ENCODE measurements at regions of chr14 and their contacts with region 1.

Region 1: GRCh38 chr14:33564774-33565630 is 385.9 kb downstream of the EGLN3 start:
- DNase-seq: peak; percentile 98
- H3K4me3 ChIP-seq: peak overlapping the region in 1 of 3 experiments; percentile 16
- H3K27ac ChIP-seq: peak overlapping the region; percentile 100
- H3K4me1 ChIP-seq: peaks cover 69% of the 10 kb centered on the region
- H3K27me3 ChIP-seq: no peaks in the 10 kb centered on the region
- CTCF ChIP-seq: no peak
- POLR2A ChIP-seq: peak; percentile 19

Region 2: GRCh38 chr14:33475623-33476022 is 89.4 kb before region 1 on chr14:
- CTCF ChIA-PET with region 1: interaction called, 21 read pairs
- POLR2A ChIA-PET with region 1: no interaction called
- dilution Hi-C with region 1: no loop called
- intact Hi-C with region 1: loop called (anchors 1 kb)
- DNase-seq: peak; percentile 88
- H3K4me3 ChIP-seq: no peak overlapping the region
- H3K27ac ChIP-seq: no peak overlapping the region
- H3K4me1 ChIP-seq: peaks cover 8% of the 10 kb centered on the region
- H3K27me3 ChIP-seq: no peaks in the 10 kb centered on the region
- CTCF ChIP-seq: peak; percentile 60 to 74
- POLR2A ChIP-seq: no peak

Region 3: GRCh38 chr14:33539918-33540357 is 25.1 kb before region 1 on chr14:
- CTCF ChIA-PET with region 1: interaction called, 7 read pairs
- POLR2A ChIA-PET with region 1: no interaction called
- dilution Hi-C with region 1: no loop called
- intact Hi-C with region 1: loop called (anchors 1 kb)
- DNase-seq: peak; percentile 76
- H3K4me3 ChIP-seq: no peak overlapping the region
- H3K27ac ChIP-seq: peak overlapping the region; percentile 58
- H3K4me1 ChIP-seq: peaks cover 21% of the 10 kb centered on the region
- H3K27me3 ChIP-seq: no peaks in the 10 kb centered on the region
- CTCF ChIP-seq: no peak
- POLR2A ChIP-seq: no peak

Region 4: GRCh38 chr14:33584697-33585096 is 19.7 kb after region 1 on chr14:
- CTCF ChIA-PET with region 1: no interaction called
- POLR2A ChIA-PET with region 1: no interaction called
- dilution Hi-C with region 1: no loop called
- intact Hi-C with region 1: no loop called
- DNase-seq: no peak
- H3K4me3 ChIP-seq: no peak overlapping the region
- H3K27ac ChIP-seq: no peak overlapping the region
- H3K4me1 ChIP-seq: no peaks in the 10 kb centered on the region
- H3K27me3 ChIP-seq: no peaks in the 10 kb centered on the region
- CTCF ChIP-seq: no peak
- POLR2A ChIP-seq: no peak

Region 5: GRCh38 chr14:33647385-33647786 is 82.4 kb after region 1 on chr14:
- CTCF ChIA-PET with region 1: no interaction called
- POLR2A ChIA-PET with region 1: no interaction called
- dilution Hi-C with region 1: no loop called
- intact Hi-C with region 1: loop called (anchors 1 kb)
- DNase-seq: peak; percentile 85
- H3K4me3 ChIP-seq: no peak overlapping the region
- H3K27ac ChIP-seq: peak overlapping the region; percentile 90
- H3K4me1 ChIP-seq: peaks cover 30% of the 10 kb centered on the region
- H3K27me3 ChIP-seq: no peaks in the 10 kb centered on the region
- CTCF ChIP-seq: no peak
- POLR2A ChIP-seq: no peak

Region 6: DNA sequence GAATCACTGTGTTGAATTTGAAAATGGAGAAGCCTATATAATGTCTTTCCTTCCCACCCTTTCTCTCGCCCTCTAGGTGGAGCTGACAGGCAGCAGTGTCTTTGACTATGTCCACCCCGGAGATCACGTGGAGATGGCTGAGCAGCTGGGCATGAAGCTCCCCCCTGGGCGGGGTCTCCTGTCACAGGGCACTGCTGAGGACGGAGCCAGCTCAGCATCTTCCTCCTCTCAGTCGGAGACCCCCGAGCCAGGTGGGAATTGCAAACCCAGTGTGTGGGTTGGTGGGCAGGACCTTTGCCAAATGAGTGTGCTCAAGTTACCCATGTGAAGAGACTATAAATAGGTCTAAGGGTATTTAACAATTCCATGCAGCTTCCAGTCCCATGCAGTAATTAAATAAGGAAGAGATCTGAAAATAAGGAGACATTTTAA is 111.1 kb after region 1 on chr14:
- CTCF ChIA-PET with region 1: interaction called, 11 read pairs
- POLR2A ChIA-PET with region 1: interaction called, 5 read pairs
- dilution Hi-C with region 1: no loop called
- intact Hi-C with region 1: no loop called
- DNase-seq: peak; percentile 26
- H3K4me3 ChIP-seq: no peak overlapping the region
- H3K27ac ChIP-seq: no peak overlapping the region
- H3K4me1 ChIP-seq: peaks cover 20% of the 10 kb centered on the region
- H3K27me3 ChIP-seq: no peaks in the 10 kb centered on the region
- CTCF ChIP-seq: peak; percentile 17 to 29
- POLR2A ChIP-seq: no peak